CD4-positive, alpha-beta T cell (primary cell): ENCODE measurements at regions of chr2 and their contacts with region 1.

Region 1: DNA sequence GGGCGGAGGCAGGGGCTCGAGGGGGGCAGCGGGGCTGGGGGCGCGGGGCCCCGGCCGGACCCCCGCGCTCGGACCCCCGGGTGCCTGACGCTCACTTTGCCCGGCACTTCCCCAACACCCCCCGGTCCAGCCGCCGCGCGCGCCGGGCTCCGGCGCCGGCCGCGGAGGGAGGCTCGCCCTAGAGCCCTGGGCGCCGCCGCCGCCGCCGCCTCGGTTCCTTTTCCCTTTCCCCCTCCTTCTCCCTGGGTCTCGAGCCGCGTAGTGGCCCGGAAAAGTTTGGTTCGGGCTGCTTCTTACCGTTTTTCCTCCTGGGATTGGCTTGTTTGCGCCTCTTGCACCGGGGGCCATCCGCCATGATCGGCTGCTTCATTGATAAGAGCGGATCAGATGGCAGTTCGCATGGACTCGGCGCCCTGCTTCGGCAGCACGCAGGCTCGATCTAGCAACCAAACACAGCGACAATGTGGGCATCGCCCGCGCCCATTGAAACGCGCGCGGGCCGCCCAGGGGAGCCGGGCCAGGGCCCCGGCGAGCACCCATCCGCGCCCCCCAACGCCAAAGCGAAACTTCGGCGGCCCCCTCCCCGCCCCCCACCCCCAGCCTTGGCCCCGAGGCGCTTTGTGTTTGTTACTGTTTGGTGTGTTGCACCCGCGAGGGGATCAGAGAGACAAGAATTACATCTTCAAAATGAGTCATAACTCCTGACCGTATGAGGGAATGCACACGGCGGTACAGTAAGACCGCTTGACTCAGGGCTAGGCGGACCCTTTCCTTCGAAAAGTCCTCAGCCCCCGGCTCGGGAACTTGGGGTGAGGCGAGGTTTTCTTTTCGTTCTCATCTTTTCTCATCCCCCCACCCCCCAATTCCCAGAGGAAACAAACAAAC is 2.7 kb downstream of the ZEB2 start:
- DNase-seq: peak in 7 of 14 experiments; percentile 25 to 80 (median 45)
- ATAC-seq: peak; percentile 61
- H3K4me3 ChIP-seq: peak overlapping the region; percentile 68
- H3K4me3 Mint-ChIP-seq: peak overlapping the region; percentile 96
- H3K27ac ChIP-seq: peak overlapping the region in 1 of 2 donors; percentile 48
- H3K27ac Mint-ChIP-seq: peak overlapping the region; percentile 40
- H3K4me1 ChIP-seq: peaks cover 34% of the 10 kb centered on the region
- H3K4me1 Mint-ChIP-seq: peaks cover 8% of the 10 kb centered on the region
- H3K27me3 ChIP-seq: peaks cover 55 to 77% of the 10 kb centered on the region in 2 experiments
- H3K27me3 Mint-ChIP-seq: peaks cover 38% of the 10 kb centered on the region
- CTCF ChIP-seq: no peak

Region 2: DNA sequence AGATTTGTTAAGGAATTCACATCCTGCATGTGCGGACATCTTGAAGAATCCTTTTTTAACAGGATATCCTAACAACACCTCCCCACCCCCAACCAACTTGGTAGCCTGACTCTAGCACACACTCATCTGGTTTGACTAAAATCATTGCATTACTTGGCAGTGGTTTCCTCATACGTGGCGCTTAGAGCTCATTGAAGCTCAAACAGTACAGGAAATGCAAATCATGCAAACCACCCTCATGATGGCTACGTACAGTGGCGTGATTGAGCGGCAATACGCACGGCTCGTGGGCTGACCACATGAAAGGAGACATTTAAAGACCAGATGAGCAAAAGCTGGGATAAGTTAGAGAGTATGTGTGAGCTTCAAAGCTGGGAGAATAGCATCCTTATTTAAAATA is 333.5 kb before region 1 on chr2:
- CTCF ChIA-PET with region 1: no interaction called
- POLR2A ChIA-PET with region 1: no interaction called
- intact Hi-C with region 1: loop called in 1 of 2 experiments (anchors 10 kb)
- DNase-seq: peak; percentile 26 to 93 (median 50)
- ATAC-seq: peak; percentile 98
- H3K4me3 ChIP-seq: peak overlapping the region; percentile 36
- H3K4me3 Mint-ChIP-seq: peak overlapping the region; percentile 70
- H3K27ac ChIP-seq: no peak overlapping the region
- H3K27ac Mint-ChIP-seq: peak overlapping the region; percentile 39
- H3K4me1 ChIP-seq: peaks cover 3% of the 10 kb centered on the region
- H3K4me1 Mint-ChIP-seq: peaks cover 15% of the 10 kb centered on the region
- H3K27me3 ChIP-seq: no peaks in the 10 kb centered on the region
- H3K27me3 Mint-ChIP-seq: no peaks in the 10 kb centered on the region
- CTCF ChIP-seq: no peak

Region 3: DNA sequence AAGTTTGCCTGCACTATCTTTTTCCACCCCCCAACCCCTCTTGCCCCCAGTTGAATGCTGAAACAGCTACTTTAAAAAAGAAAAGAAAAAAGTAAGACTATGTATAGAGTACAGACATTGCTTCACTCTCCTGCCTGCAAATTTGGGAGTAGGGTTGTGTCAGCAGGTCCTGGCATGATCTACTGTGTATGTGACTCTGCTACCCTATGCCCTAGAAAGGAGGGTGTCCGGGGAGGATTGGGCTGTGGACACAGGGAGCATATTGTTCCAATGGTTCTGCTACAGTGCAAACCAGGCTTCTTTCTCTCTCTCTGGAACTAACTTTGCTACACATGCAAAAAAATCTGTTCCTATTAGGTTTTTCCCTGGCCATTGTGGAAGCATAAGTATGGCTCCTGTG is 12.6 kb after region 1 on chr2:
- CTCF ChIA-PET with region 1: no interaction called
- POLR2A ChIA-PET with region 1: no interaction called
- intact Hi-C with region 1: no loop called
- DNase-seq: no peak
- ATAC-seq: no peak
- H3K4me3 ChIP-seq: no peak overlapping the region
- H3K4me3 Mint-ChIP-seq: no peak overlapping the region
- H3K27ac ChIP-seq: no peak overlapping the region
- H3K27ac Mint-ChIP-seq: no peak overlapping the region
- H3K4me1 ChIP-seq: no peaks in the 10 kb centered on the region
- H3K4me1 Mint-ChIP-seq: peaks cover under 1% of the 10 kb centered on the region
- H3K27me3 ChIP-seq: peaks cover 5 to 9% of the 10 kb centered on the region in 2 experiments
- H3K27me3 Mint-ChIP-seq: peaks cover 60% of the 10 kb centered on the region
- CTCF ChIP-seq: no peak

Region 4: GRCh38 chr2:144770616-144771230 is 253.5 kb after region 1 on chr2:
- CTCF ChIA-PET with region 1: no interaction called
- POLR2A ChIA-PET with region 1: no interaction called
- intact Hi-C with region 1: no loop called
- DNase-seq: no peak
- ATAC-seq: no peak
- H3K4me3 ChIP-seq: no peak overlapping the region
- H3K4me3 Mint-ChIP-seq: no peak overlapping the region
- H3K27ac ChIP-seq: no peak overlapping the region
- H3K27ac Mint-ChIP-seq: no peak overlapping the region
- H3K4me1 ChIP-seq: no peaks in the 10 kb centered on the region
- H3K4me1 Mint-ChIP-seq: no peaks in the 10 kb centered on the region
- H3K27me3 ChIP-seq: no peaks in the 10 kb centered on the region
- H3K27me3 Mint-ChIP-seq: no peaks in the 10 kb centered on the region
- CTCF ChIP-seq: no peak